Heart right ventricle (tissue), 16 donors: ENCODE measurements at regions of chr7 and their contacts with region 1.

Region 1: GRCh38 chr7:23486002-23486775 is 15.9 kb upstream of the IGF2BP3 start:
- DNase-seq: no peak
- ATAC-seq: no peak
- H3K4me3 ChIP-seq: no peak overlapping the region
- H3K27ac ChIP-seq: no peak overlapping the region
- H3K4me1 ChIP-seq: peaks cover 0 to 5% (median 0%) of the 10 kb centered on the region in 9 donors
- H3K27me3 ChIP-seq: peaks cover 0 to 30% (median 18%) of the 10 kb centered on the region in 7 donors
- CTCF ChIP-seq: no peak

Region 2: GRCh38 chr7:23283086-23283485 is 203.1 kb before region 1 on chr7:
- intact Hi-C with region 1: no loop called
- DNase-seq: no peak
- ATAC-seq: no peak
- H3K4me3 ChIP-seq: no peak overlapping the region
- H3K27ac ChIP-seq: no peak overlapping the region
- H3K4me1 ChIP-seq: no peaks in the 10 kb centered on the region
- H3K27me3 ChIP-seq: no peaks in the 10 kb centered on the region
- CTCF ChIP-seq: no peak

Region 3: GRCh38 chr7:23298885-23299769 is 187.1 kb before region 1 on chr7 and contains the start of gene MALSU1:
- intact Hi-C with region 1: loop called in 1 of 10 experiments (anchors 10 kb)
- DNase-seq: peak; percentile 96 to 97
- ATAC-seq: peak; percentile 100
- H3K4me3 ChIP-seq: peak within 1 kb of the TSS; percentile 82 to 97 (median 92)
- H3K27ac ChIP-seq: peak within 1 kb of the TSS; percentile 32 to 94 (median 84)
- H3K4me1 ChIP-seq: peaks cover 0 to 51% (median 31%) of the 10 kb centered on the region in 9 donors
- H3K27me3 ChIP-seq: no peaks in the 10 kb centered on the region
- CTCF ChIP-seq: no peak
- total RNA-seq, gene MALSU1: 92.2 to 132 (median 99.3) TPM